Activated CD8-positive, alpha-beta T cell treated with anti-CD3 and anti-CD28 coated beads for 36 hours (primary cell): ENCODE measurements at regions of chr5 and their contacts with region 1.

Region 1: DNA sequence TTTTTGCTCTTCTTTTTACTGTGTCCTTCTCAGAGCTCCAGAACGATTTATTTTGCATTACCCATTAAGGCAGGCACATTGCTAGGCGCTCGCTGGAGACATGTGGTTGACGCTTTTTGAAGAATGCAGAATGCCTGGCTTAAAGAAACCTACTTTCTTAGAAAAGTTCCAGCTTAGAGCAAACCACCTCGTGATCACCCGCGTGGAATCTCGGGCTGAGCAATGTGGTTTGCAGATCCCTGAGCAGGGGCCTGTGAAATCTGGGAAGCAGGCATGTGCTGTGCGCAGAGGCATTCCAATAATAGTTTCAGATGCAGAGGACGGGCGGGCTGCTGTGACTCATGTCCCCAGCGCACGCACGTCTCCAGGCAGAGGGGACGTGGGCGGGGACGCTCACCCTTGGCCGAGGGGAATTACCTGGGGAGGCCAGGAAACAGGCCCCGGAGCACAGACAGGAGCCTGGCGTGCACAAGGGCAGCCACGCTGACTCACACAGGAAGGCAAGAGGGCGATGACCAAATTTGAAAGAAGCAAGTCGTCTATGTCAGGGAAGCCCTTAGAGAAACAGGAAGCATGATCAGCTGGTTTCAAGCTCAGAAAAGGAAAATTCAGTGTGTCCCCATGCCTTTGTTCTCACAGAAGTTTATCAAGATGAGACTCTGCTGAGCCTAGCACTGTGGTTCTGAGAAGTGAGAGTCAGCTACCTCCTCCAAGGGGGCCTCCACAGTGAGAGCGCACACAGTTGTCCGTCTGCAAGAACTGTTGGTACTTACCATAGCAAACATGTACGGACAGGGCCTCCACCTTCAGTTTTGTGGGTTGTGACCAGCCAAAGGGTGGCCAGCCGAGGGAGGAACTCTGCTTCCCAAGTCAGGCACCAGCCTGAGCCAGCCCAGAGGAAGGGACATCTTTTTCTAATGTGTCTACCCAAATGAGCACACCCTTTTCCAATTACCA is 218.6 kb downstream of the PIK3R1 start:
- DNase-seq: peak; percentile 98
- ATAC-seq: peak; percentile 95
- H3K4me3 Mint-ChIP-seq: peak overlapping the region; percentile 33
- H3K27ac Mint-ChIP-seq: peak overlapping the region; percentile 78
- H3K4me1 Mint-ChIP-seq: peaks cover 57% of the 10 kb centered on the region
- H3K27me3 Mint-ChIP-seq: peaks cover 4% of the 10 kb centered on the region
- CTCF ChIP-seq: no peak

Region 2: GRCh38 chr5:68343421-68343826 is 90.8 kb before region 1 on chr5:
- CTCF ChIA-PET with region 1: no interaction called
- POLR2A ChIA-PET with region 1: no interaction called
- intact Hi-C with region 1: loop called (anchors 5 kb)
- DNase-seq: peak; percentile 42
- ATAC-seq: peak; percentile 88
- H3K4me3 Mint-ChIP-seq: no peak overlapping the region
- H3K27ac Mint-ChIP-seq: no peak overlapping the region
- H3K4me1 Mint-ChIP-seq: peaks cover 31% of the 10 kb centered on the region
- H3K27me3 Mint-ChIP-seq: no peaks in the 10 kb centered on the region
- CTCF ChIP-seq: no peak

Region 3: DNA sequence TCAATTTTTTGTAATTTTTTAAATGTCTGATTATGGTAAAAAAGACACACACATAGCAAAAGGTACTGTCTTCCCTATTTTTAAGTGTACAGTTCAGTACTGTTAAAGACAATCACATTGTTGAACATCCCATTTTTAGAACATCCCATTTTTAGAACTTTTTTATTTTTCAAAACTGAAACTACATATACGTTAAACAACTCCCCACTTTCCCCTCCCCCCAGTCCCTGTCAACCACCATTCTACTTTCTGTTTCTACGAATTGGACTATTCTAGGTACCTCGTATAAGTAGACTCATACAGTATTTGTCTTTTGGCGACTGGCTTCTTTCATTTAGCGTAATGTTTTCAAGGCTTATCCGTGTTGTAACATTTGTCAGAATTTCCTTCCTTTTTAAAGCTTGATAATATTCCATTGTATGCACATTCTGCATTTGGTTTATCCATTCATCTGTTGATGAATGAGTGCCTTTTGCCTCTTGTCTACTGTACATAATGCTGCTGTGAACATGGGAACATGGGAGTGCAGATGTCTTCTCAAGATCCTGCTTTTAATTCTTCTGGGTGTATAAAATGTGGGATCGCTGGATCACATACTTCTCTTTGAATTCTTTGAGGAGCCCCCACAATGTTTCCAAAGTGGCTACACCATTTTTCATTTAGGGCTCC is 64.6 kb before region 1 on chr5:
- CTCF ChIA-PET with region 1: interaction called, 3 read pairs
- POLR2A ChIA-PET with region 1: no interaction called
- intact Hi-C with region 1: loop called (anchors 5 kb)
- DNase-seq: peak; percentile 83
- ATAC-seq: peak; percentile 95
- H3K4me3 Mint-ChIP-seq: peak overlapping the region; percentile 36
- H3K27ac Mint-ChIP-seq: peak overlapping the region; percentile 71
- H3K4me1 Mint-ChIP-seq: peaks cover 31% of the 10 kb centered on the region
- H3K27me3 Mint-ChIP-seq: no peaks in the 10 kb centered on the region
- CTCF ChIP-seq: no peak